IMR-90 (cell line): ENCODE measurements at regions of chr10 and their contacts with region 1.

Region 1: DNA sequence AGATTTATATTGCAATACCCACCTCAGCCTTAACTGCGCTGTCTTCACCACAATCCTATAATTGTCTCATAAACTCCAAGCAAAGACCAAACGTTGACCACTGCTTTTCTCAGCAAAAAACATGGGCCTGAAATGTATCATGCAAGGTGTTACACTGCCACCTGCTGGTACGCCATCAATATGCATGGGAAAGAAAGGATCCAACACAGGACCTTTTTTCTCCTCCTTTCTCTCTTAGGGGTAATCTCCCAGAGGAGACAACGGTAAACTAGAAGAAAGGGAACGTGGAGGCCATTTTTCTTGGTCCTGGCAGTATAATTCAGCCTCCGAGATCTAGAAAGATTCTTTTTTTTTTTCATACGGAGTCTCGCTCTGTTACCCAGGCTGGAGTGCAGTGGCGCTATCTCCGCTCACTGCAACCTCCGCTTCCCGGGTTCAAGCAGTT is 79.1 kb upstream of the MPP7 start:
- DNase-seq: peak; percentile 91
- ATAC-seq: peak; percentile 93
- H3K4me3 ChIP-seq: no peak overlapping the region
- H3K27ac ChIP-seq: no peak overlapping the region
- H3K4me1 ChIP-seq: no peaks in the 10 kb centered on the region
- H3K27me3 ChIP-seq: peaks cover 13% of the 10 kb centered on the region
- CTCF ChIP-seq: peak; percentile 98
- POLR2A ChIP-seq: peak; percentile 64; the same call in 1 of the 2 replicates
- RAD21 ChIP-seq: peak; percentile 99

Region 2: GRCh38 chr10:27446091-27446918 is 935.6 kb before region 1 on chr10:
- CTCF ChIA-PET with region 1: no interaction called
- POLR2A ChIA-PET with region 1: no interaction called
- dilution Hi-C with region 1: no loop called
- in situ Hi-C with region 1: loop called (anchors 10 kb)
- intact Hi-C with region 1: loop called (anchors 5 kb)
- DNase-seq: peak; percentile 47
- ATAC-seq: peak; percentile 90
- H3K4me3 ChIP-seq: no peak overlapping the region
- H3K27ac ChIP-seq: peak overlapping the region; percentile 74; the same call in 1 of the 2 replicates
- H3K4me1 ChIP-seq: no peaks in the 10 kb centered on the region
- H3K27me3 ChIP-seq: no peaks in the 10 kb centered on the region; the same call in 1 of the 2 replicates
- CTCF ChIP-seq: peak; percentile 56
- POLR2A ChIP-seq: no peak
- RAD21 ChIP-seq: peak; percentile 44

Region 3: DNA sequence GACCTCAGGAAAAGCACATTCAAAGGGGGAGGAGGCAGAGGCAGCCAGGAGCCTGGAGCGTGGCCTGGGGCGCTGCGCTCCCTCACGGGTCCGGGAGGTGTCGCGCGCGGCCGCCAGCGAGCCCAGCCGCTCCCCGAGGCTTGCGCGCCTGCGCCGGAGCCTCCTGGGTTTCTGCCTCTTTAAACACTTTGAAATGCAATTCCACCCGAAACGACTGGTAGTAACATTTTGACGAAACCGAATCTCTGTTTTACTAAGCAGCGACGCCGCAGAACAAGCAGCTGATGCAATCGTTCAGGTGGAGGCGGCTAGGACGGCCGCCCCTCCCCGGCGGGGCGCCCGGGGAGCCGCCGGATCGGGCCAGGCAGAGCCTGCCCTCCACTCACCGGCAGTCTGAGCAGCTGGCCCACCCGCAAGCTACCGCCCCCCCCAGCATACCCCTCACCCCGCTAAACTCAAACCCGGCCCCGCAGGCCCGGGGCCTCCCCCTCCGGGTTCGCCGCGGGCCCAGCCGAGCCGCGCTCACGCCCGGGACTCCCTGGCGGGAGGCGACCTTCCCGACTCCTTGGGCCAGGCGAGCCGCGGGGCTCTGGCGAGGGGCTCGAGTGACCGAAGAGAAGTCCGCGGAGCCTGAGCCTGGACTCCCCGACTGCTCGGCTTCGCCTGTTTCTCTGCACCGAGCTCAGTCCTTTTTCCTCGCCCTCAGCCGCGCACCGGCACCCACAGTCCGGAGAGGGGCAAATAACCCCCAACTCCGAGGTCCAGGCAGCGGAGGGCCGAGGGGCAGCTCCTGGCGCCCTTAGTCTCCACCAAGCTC is 639.5 kb before region 1 on chr10:
- CTCF ChIA-PET with region 1: no interaction called
- POLR2A ChIA-PET with region 1: no interaction called
- dilution Hi-C with region 1: no loop called
- in situ Hi-C with region 1: loop called (anchors 25 kb)
- intact Hi-C with region 1: loop called (anchors 2 kb)
- DNase-seq: peak; percentile 85
- ATAC-seq: peak; percentile 85
- H3K4me3 ChIP-seq: peak overlapping the region; percentile 33
- H3K27ac ChIP-seq: peak overlapping the region; percentile 38
- H3K4me1 ChIP-seq: peaks cover 3% of the 10 kb centered on the region; the same call in 1 of the 2 replicates
- H3K27me3 ChIP-seq: peaks cover 46% of the 10 kb centered on the region
- CTCF ChIP-seq: peak; percentile 89
- POLR2A ChIP-seq: peak; percentile 61
- RAD21 ChIP-seq: peak; percentile 83

Region 4: DNA sequence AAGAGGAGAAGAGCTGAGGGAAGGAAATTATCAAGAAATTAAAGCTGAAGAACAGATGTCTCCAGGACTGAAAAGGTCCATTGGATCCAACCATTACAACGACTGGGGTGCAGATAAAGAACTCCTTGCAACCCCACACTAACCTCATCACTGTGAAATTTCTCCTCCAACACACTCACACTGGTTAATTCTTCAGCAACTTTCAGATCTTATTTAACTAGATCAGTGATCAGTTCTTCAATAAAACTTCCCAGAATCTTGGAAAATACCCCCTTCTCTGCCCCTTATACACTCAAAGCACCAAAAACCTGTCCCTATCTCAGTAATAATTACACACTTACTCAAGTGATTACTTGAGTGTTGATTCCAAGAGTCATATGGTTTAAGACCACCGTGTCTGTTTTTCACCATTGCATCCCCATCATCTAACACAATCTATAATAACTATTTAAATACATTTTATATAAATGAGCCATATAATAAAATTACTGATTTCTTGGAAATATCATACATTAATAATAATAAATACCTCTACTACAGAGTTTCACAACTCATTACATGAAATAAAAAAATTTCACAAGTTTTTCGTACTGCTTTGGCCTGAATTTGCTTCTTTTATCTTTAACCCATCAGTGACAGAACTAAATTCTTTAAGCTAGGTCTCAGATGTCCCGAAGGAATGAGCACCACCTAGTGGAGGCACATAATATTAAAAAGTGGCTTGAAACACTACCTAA is 202.8 kb before region 1 on chr10:
- CTCF ChIA-PET with region 1: no interaction called
- POLR2A ChIA-PET with region 1: no interaction called
- dilution Hi-C with region 1: no loop called
- in situ Hi-C with region 1: no loop called
- intact Hi-C with region 1: loop called (anchors 2 kb)
- DNase-seq: peak; percentile 62
- ATAC-seq: peak; percentile 79
- H3K4me3 ChIP-seq: no peak overlapping the region
- H3K27ac ChIP-seq: no peak overlapping the region
- H3K4me1 ChIP-seq: 0 out of 2 replicates have a peak, but pooled peaks cover 2% of the 10 kb centered on the region
- H3K27me3 ChIP-seq: no peaks in the 10 kb centered on the region
- CTCF ChIP-seq: peak; percentile 80
- POLR2A ChIP-seq: 0 out of 2 replicates have a peak, but pooled peaks have one; percentile 30
- RAD21 ChIP-seq: peak; percentile 89

Region 5: GRCh38 chr10:28302638-28303488 is 79.1 kb before region 1 on chr10 and contains the start of gene MPP7:
- CTCF ChIA-PET with region 1: interaction called, 3 read pairs
- POLR2A ChIA-PET with region 1: no interaction called
- dilution Hi-C with region 1: no loop called
- in situ Hi-C with region 1: no loop called
- intact Hi-C with region 1: loop called (anchors 1 kb)
- DNase-seq: peak; percentile 98
- ATAC-seq: peak; percentile 100
- H3K4me3 ChIP-seq: peak within 1 kb of the TSS; percentile 64
- H3K27ac ChIP-seq: no peak within 1 kb of the TSS
- H3K4me1 ChIP-seq: no peaks in the 10 kb centered on the region
- H3K27me3 ChIP-seq: peaks cover 36% of the 10 kb centered on the region
- CTCF ChIP-seq: peak; percentile 27
- POLR2A ChIP-seq: no peak
- RAD21 ChIP-seq: peak; percentile 22; the same call in 1 of the 2 replicates
- total RNA-seq, gene MPP7: 1.4 TPM in 2 replicates